OCI-LY7 (cell line): ENCODE measurements at regions of chr4 and their contacts with region 1.

Region 1: DNA sequence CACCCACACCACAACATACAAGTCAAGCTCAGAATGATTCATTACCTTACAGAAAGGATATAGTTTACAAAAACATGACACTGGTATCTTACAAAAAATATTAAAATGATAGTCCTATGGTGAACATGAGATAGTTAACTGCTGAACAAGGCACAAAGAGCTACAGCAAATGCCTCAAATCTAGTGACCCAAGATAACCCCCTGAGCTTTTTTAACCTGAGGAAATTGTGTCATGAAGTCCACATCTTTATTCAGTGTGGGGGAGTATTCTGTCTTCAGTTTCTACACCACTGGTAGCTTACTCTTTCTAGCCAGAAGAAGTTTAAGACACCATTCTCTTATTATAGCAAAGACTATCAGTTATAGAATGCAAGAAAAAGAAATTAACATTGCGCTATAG is 218.7 kb downstream of the MAPK10 start:
- DNase-seq: no peak
- H3K4me3 ChIP-seq: no peak overlapping the region
- H3K27ac ChIP-seq: no peak overlapping the region
- H3K4me1 ChIP-seq: no peaks in the 10 kb centered on the region
- CTCF ChIP-seq: no peak

Region 2: DNA sequence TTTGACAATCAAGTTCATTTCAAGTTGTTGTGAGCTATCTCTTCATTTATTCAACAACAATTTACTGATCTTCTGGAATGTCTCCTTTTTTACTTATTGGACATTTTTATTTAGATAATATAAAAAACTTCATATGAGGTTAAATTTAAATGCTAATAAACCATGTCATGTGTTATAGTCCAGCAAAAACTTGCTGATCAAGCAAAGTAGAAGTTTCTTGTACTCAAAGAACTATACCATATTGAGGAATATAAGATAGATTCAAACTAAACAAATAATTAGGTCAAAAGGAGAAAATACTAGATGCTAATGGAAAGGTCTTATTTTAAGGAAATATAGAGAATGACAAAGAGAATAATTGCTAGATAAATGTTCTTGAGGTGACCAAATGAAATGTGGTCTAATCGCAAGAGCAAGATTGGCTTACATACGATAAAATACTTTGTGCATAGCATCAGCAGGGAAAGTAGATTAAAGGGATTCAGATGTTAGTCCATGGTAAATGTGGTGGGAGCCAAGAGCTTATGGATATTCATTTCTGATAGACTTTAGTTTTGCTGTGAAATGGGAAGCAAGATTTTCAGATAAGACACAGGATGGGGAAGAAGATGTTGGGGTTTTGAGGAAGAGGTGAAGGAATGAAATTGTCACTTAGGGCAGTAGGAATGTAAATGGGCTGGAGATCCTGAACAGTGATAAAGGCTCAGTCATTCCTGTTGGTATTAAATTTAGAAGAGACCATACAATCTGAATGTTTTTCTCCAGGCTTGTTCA is 10.8 kb before region 1 on chr4:
- CTCF ChIA-PET with region 1: no interaction called
- POLR2A ChIA-PET with region 1: interaction called, 10 read pairs
- intact Hi-C with region 1: no loop called
- DNase-seq: no peak
- H3K4me3 ChIP-seq: no peak overlapping the region
- H3K27ac ChIP-seq: no peak overlapping the region
- H3K4me1 ChIP-seq: no peaks in the 10 kb centered on the region
- CTCF ChIP-seq: no peak

Region 3: GRCh38 chr4:86181585-86181984 is 40.4 kb after region 1 on chr4:
- CTCF ChIA-PET with region 1: no interaction called
- POLR2A ChIA-PET with region 1: no interaction called
- intact Hi-C with region 1: no loop called
- DNase-seq: no peak
- H3K4me3 ChIP-seq: no peak overlapping the region
- H3K27ac ChIP-seq: no peak overlapping the region
- H3K4me1 ChIP-seq: no peaks in the 10 kb centered on the region
- CTCF ChIP-seq: no peak